ENCODE measurements at regions of chr6 and their contacts with region 1.

Region 1: GRCh38 chr6:52653151-52653550 is 17.8 kb upstream of the TMEM14A start:
- DNase-seq: no peak
- ATAC-seq: no peak
- H3K4me3 ChIP-seq: no peak overlapping the region
- H3K4me3 Mint-ChIP-seq: no peak overlapping the region
- H3K27ac ChIP-seq: no peak overlapping the region
- H3K27ac Mint-ChIP-seq: no peak overlapping the region
- H3K4me1 ChIP-seq: no peaks in the 10 kb centered on the region
- H3K4me1 Mint-ChIP-seq: peaks cover 4 to 13% (median 8%) of the 10 kb centered on the region in 7 donors
- H3K27me3 ChIP-seq: no peaks in the 10 kb centered on the region
- H3K27me3 Mint-ChIP-seq: peaks cover 0 to 57% (median 15%) of the 10 kb centered on the region in 5 donors

Region 2: DNA sequence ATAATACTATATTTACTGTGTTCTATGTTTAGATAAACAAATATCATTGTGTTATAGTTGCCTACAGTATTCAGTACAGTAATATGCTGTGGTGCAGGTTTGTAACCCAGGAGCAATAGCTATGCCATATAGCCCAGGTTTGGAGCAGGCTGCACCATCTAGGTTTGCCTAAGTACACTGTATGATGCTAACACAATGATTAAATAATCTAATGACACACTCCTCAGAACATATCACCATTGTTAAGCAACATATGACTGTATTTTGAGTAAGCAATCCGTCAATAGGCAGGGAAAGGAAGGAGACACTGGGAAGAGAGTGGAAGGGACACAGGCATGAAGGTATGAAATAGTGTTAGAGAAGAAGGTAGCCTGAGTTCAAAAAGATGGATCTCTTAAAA is 935.7 kb before region 1 on chr6:
- CTCF ChIA-PET with region 1: no interaction called
- POLR2A ChIA-PET with region 1: no interaction called
- intact Hi-C with region 1: no loop called
- DNase-seq: no peak
- ATAC-seq: no peak
- H3K4me3 ChIP-seq: no peak overlapping the region
- H3K4me3 Mint-ChIP-seq: no peak overlapping the region
- H3K27ac ChIP-seq: no peak overlapping the region
- H3K27ac Mint-ChIP-seq: no peak overlapping the region
- H3K4me1 ChIP-seq: no peaks in the 10 kb centered on the region
- H3K4me1 Mint-ChIP-seq: no peaks in the 10 kb centered on the region
- H3K27me3 ChIP-seq: no peaks in the 10 kb centered on the region
- H3K27me3 Mint-ChIP-seq: peaks cover 0 to 4% (median 0%) of the 10 kb centered on the region in 5 donors

Region 3: DNA sequence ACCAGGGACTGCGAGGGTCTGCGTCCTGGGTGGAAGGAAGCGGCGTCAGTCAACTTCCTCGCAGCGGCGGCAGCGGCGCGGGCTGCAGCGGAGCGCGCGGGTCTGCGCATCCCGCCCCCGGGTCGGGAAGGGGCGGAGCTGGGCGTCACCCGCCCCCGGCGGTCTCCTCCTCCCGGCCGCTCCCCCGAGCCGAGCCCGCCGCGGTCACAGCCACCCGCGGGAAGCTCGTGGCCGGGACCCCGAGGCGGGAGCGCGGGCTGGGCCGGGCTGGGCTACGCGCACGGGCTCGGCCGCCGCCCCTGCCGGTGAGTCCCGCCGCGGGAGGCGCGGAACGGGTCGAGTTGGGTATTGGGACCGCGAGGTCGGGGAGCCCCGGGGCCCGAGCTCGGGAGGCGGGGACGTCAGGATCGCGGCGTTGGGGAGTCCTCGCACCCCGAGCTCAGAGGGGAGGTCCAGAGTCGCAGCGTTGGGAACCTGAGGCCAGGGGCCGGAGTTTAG is 291.2 kb before region 1 on chr6 and contains the start of gene PAQR8:
- CTCF ChIA-PET with region 1: no interaction called
- POLR2A ChIA-PET with region 1: no interaction called
- intact Hi-C with region 1: no loop called
- DNase-seq: peak; percentile 77 to 89 (median 86)
- ATAC-seq: peak; percentile 95
- H3K4me3 ChIP-seq: peak within 1 kb of the TSS; percentile 90
- H3K4me3 Mint-ChIP-seq: peak within 1 kb of the TSS; percentile 83 to 100 (median 98)
- H3K27ac ChIP-seq: peak within 1 kb of the TSS; percentile 86
- H3K27ac Mint-ChIP-seq: peak within 1 kb of the TSS; percentile 90 to 99 (median 94)
- H3K4me1 ChIP-seq: peaks cover 25 to 28% of the 10 kb centered on the region in 2 donors
- H3K4me1 Mint-ChIP-seq: peaks cover 25 to 55% (median 45%) of the 10 kb centered on the region in 7 donors
- H3K27me3 ChIP-seq: no peaks in the 10 kb centered on the region
- H3K27me3 Mint-ChIP-seq: peaks cover 0 to 9% (median 0%) of the 10 kb centered on the region in 5 donors
- total RNA-seq, gene PAQR8: 7.5 to 46.2 (median 21.6) TPM

Region 4: GRCh38 chr6:52670502-52671409 is 17.6 kb after region 1 on chr6 and contains the start of gene TMEM14A:
- CTCF ChIA-PET with region 1: interaction called, 5 read pairs
- POLR2A ChIA-PET with region 1: no interaction called
- intact Hi-C with region 1: loop called (anchors 2 kb)
- DNase-seq: peak; percentile 81 to 94 (median 88)
- ATAC-seq: peak; percentile 96
- H3K4me3 ChIP-seq: peak within 1 kb of the TSS; percentile 74
- H3K4me3 Mint-ChIP-seq: peak within 1 kb of the TSS; percentile 86 to 97 (median 92)
- H3K27ac ChIP-seq: peak within 1 kb of the TSS; percentile 67
- H3K27ac Mint-ChIP-seq: peak within 1 kb of the TSS; percentile 52 to 94 (median 84)
- H3K4me1 ChIP-seq: peaks cover 12 to 15% of the 10 kb centered on the region in 2 donors
- H3K4me1 Mint-ChIP-seq: peaks cover 25 to 38% (median 35%) of the 10 kb centered on the region in 7 donors
- H3K27me3 ChIP-seq: no peaks in the 10 kb centered on the region
- H3K27me3 Mint-ChIP-seq: peaks cover 0 to 3% (median 0%) of the 10 kb centered on the region in 5 donors
- total RNA-seq, gene TMEM14A: 5.3 to 18.2 (median 8.0) TPM

Region 5: DNA sequence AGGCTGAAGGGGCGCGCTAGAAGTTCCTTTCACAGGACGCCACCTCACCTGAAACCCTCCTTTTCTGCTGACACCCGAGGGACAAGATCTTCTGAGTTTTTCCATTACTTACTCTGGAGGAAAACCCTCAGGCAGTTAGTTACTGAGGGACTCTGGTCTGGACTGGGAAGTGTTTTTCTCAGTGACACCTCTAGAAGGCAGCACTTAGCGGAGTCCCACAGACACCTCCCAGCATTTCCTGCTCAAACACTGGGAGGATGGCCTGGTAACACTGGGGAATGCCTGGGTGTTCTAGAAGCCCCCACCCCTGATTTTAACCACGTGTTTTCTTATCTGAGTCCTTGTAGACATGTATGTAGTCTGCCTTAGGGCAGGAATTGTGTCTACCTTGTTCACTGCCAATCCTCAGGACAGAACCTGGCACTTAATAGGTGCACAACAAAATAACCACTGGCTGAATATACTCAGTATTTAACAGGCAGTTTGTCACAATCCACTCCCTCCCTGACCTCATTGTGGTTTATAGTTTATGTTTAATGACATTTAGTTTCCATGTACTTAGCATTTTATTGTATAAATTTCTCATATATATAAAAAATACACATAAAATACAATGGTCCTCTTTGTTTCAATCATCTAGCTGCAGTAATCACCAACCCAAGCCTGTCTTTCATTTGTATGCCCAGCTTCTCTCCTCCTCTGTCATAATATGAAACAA is 251.6 kb after region 1 on chr6:
- CTCF ChIA-PET with region 1: no interaction called
- POLR2A ChIA-PET with region 1: no interaction called
- intact Hi-C with region 1: no loop called
- DNase-seq: no peak
- ATAC-seq: no peak
- H3K4me3 ChIP-seq: no peak overlapping the region
- H3K4me3 Mint-ChIP-seq: no peak overlapping the region
- H3K27ac ChIP-seq: no peak overlapping the region
- H3K27ac Mint-ChIP-seq: no peak overlapping the region
- H3K4me1 ChIP-seq: no peaks in the 10 kb centered on the region
- H3K4me1 Mint-ChIP-seq: no peaks in the 10 kb centered on the region
- H3K27me3 ChIP-seq: no peaks in the 10 kb centered on the region
- H3K27me3 Mint-ChIP-seq: peaks cover 0 to 11% (median 3%) of the 10 kb centered on the region in 5 donors

Measured in naive thymus-derived CD4-positive, alpha-beta T cell (primary cell).